PC-9 (cell line): ENCODE measurements at regions of chr15 and their contacts with region 1.

Region 1: GRCh38 chr15:75565062-75565970 is 13.8 kb downstream of the PTPN9 start:
- DNase-seq: no peak
- H3K4me3 ChIP-seq: no peak overlapping the region
- H3K27ac ChIP-seq: no peak overlapping the region
- H3K4me1 ChIP-seq: no peaks in the 10 kb centered on the region
- H3K27me3 ChIP-seq: no peaks in the 10 kb centered on the region
- CTCF ChIP-seq: no peak

Region 2: DNA sequence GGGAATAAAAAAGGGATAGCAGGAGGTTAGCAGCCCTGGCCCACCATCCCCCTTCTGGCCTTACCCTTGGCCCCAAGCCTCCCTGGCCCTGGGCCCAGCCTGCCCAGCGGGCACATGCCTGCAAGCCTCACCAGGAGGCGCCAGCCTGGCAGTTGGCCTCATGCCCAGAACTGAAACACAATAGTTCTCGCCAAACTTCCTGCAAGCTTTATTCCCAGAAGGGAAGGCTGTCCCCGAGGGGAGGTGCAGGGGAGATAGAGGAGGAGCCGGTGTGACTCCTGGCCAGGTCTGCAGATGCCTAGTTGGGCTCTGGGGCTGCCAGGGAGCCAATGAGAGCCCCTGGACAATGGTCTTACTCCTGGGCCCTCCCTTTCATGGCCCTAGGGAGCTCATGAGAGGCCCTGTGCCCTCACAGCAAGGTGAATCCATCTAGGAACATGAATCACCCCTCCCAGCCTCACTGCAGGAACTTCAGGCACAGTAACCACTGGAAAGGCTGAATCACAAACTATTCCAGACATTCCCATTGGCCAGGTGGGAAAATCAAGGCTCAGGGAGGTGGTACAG is 1325.2 kb before region 1 on chr15:
- CTCF ChIA-PET with region 1: no interaction called
- POLR2A ChIA-PET with region 1: no interaction called
- intact Hi-C with region 1: no loop called
- DNase-seq: peak; percentile 96 to 97
- H3K4me3 ChIP-seq: no peak overlapping the region
- H3K27ac ChIP-seq: peak overlapping the region; percentile 63; the same call in 1 of the 2 replicates
- H3K4me1 ChIP-seq: peaks cover 67% of the 10 kb centered on the region
- H3K27me3 ChIP-seq: no peaks in the 10 kb centered on the region
- CTCF ChIP-seq: peak; percentile 68

Region 3: GRCh38 chr15:75590239-75590638 is 24.9 kb after region 1 on chr15:
- CTCF ChIA-PET with region 1: no interaction called
- POLR2A ChIA-PET with region 1: interaction called, 16 read pairs
- intact Hi-C with region 1: no loop called
- DNase-seq: no peak
- H3K4me3 ChIP-seq: no peak overlapping the region
- H3K27ac ChIP-seq: no peak overlapping the region
- H3K4me1 ChIP-seq: no peaks in the 10 kb centered on the region
- H3K27me3 ChIP-seq: no peaks in the 10 kb centered on the region
- CTCF ChIP-seq: no peak